Activated CD8-positive, alpha-beta T cell treated with anti-CD3 and anti-CD28 coated beads, Interleukin-2, amount 10 ng/mL, durations not matched to agents 7 days and 5 days (primary cell): ENCODE measurements at regions of chr15 and their contacts with region 1.

Region 1: DNA sequence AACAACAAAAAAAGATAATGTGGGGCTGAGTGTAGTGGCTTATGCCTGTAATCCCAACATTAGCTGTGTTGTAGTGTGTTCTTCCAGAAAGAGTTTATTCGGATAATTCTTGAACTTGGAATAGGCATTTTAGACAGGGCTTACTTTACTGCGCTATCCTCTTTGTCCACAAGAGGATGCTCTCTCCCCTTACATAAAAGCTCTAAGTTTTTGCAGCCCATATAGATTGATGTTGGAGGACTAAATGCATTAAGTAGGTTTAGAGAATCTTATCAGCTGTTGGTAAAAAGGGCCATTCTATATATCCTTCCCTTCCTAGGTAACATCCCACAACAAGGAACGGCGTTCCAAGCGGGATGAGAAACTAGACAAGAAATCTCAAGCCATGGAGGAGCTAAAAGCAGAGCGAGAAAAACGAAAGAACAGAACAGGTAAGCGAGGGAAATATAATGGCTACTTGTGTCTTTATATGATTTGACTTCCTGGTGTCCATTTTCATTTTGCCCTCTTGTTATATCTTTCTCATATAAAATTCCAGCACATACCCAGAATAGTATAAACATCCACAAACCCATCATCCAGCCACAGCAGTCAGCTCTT is 27.8 kb upstream of the ITPKA start:
- DNase-seq: peak; percentile 46
- ATAC-seq: peak; percentile 53
- H3K4me3 Mint-ChIP-seq: no peak overlapping the region
- H3K27ac Mint-ChIP-seq: no peak overlapping the region
- H3K4me1 Mint-ChIP-seq: peaks cover 5% of the 10 kb centered on the region
- H3K27me3 Mint-ChIP-seq: no peaks in the 10 kb centered on the region

Region 2: GRCh38 chr15:41429003-41429890 is 36.7 kb before region 1 on chr15:
- CTCF ChIA-PET with region 1: interaction called, 13 read pairs
- POLR2A ChIA-PET with region 1: no interaction called
- DNase-seq: peak; percentile 35
- ATAC-seq: peak; percentile 82
- H3K4me3 Mint-ChIP-seq: peak overlapping the region; percentile 12
- H3K27ac Mint-ChIP-seq: peak overlapping the region; percentile 84
- H3K4me1 Mint-ChIP-seq: peaks cover 24% of the 10 kb centered on the region
- H3K27me3 Mint-ChIP-seq: no peaks in the 10 kb centered on the region

Region 3: DNA sequence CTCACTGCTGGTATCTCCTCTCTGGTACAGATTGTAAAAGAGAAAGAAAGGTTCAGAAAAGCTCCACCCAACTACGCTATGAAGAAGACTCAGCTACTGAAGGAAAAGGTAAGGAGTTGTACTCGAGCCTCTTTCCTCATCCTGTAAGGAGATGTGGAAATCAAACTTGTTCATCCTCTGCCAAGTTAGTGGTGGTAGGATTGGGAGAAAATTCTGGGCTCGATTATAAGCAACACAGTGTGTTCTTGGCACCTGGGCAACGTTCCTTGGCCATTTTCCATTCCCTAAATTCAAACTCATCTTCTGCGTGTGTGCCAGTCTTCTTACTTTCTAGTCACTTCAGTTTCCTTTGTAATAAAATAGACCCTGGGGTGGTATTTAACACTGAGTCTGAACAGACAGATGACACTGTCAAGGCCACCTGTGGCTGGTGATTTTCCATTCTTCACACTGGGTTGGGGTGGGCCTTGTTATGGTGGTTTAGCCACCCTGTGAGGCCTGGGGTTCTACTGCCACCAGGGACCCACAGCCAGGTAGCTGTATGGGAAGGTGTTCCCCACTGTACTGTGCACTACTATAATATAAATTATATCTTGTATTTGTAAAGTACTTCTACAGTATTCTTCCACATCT is 10.6 kb after region 1 on chr15:
- CTCF ChIA-PET with region 1: interaction called, 47 read pairs
- POLR2A ChIA-PET with region 1: no interaction called
- DNase-seq: no peak
- ATAC-seq: no peak
- H3K4me3 Mint-ChIP-seq: no peak overlapping the region
- H3K27ac Mint-ChIP-seq: no peak overlapping the region
- H3K4me1 Mint-ChIP-seq: no peaks in the 10 kb centered on the region
- H3K27me3 Mint-ChIP-seq: no peaks in the 10 kb centered on the region

Region 4: GRCh38 chr15:41493205-41493901 is 27.4 kb after region 1 on chr15 and contains the start of gene ITPKA:
- CTCF ChIA-PET with region 1: interaction called, 14 read pairs
- POLR2A ChIA-PET with region 1: no interaction called
- DNase-seq: peak; percentile 64
- ATAC-seq: peak; percentile 73
- H3K4me3 Mint-ChIP-seq: peak within 1 kb of the TSS; percentile 70
- H3K27ac Mint-ChIP-seq: no peak within 1 kb of the TSS
- H3K4me1 Mint-ChIP-seq: peaks cover 38% of the 10 kb centered on the region
- H3K27me3 Mint-ChIP-seq: peaks cover 41% of the 10 kb centered on the region
- total RNA-seq, gene ITPKA: 0.24 to 0.29 TPM

Region 5: GRCh38 chr15:41557673-41558399 is 91.9 kb after region 1 on chr15:
- CTCF ChIA-PET with region 1: interaction called, 15 read pairs
- POLR2A ChIA-PET with region 1: no interaction called
- DNase-seq: peak; percentile 76
- ATAC-seq: peak; percentile 76
- H3K4me3 Mint-ChIP-seq: peak overlapping the region; percentile 74
- H3K27ac Mint-ChIP-seq: peak overlapping the region; percentile 65
- H3K4me1 Mint-ChIP-seq: peaks cover 22% of the 10 kb centered on the region
- H3K27me3 Mint-ChIP-seq: peaks cover 47% of the 10 kb centered on the region

Region 6: DNA sequence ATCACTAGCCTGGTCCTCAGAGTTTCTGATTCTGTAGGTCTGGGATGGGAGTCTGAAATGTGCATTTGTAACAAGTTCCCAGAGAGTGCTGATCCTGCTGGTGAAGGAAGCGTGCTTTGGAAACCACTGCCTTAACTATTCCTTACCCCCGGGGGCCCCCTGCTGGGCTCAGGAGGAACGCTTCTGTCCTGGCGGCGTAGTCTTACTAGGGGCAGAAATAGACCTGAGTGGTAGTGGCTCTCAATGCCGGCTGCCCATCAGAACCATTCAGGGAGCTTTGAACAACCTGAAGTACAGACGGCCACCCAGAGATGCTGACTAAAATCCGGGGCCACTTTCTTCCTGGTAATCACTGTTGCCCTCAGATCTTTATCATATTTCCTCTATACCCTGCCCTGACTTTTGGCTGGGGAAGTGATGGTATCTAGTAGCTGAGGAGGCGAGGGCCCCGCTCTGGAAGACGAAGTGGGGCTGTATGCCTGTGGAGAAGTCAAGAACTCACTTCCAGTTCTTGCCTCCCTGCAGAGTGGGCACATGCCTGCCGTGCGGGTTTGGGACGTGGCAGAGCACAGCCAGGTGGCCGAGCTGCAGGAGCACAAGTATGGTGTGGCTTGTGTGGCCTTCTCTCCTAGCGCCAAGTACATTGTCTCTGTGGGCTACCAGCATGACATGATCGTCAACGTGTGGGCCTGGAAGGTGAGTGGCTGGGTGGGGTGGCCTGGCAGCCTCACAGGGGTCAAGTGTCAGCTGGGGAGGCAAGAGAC is 345.7 kb after region 1 on chr15:
- CTCF ChIA-PET with region 1: interaction called, 11 read pairs
- POLR2A ChIA-PET with region 1: no interaction called
- DNase-seq: peak; percentile 80
- ATAC-seq: peak; percentile 89
- H3K4me3 Mint-ChIP-seq: no peak overlapping the region
- H3K27ac Mint-ChIP-seq: peak overlapping the region; percentile 69
- H3K4me1 Mint-ChIP-seq: peaks cover 34% of the 10 kb centered on the region
- H3K27me3 Mint-ChIP-seq: no peaks in the 10 kb centered on the region